Caco-2 (cell line): ENCODE measurements at regions of chr16 and their contacts with region 1.

Region 1: DNA sequence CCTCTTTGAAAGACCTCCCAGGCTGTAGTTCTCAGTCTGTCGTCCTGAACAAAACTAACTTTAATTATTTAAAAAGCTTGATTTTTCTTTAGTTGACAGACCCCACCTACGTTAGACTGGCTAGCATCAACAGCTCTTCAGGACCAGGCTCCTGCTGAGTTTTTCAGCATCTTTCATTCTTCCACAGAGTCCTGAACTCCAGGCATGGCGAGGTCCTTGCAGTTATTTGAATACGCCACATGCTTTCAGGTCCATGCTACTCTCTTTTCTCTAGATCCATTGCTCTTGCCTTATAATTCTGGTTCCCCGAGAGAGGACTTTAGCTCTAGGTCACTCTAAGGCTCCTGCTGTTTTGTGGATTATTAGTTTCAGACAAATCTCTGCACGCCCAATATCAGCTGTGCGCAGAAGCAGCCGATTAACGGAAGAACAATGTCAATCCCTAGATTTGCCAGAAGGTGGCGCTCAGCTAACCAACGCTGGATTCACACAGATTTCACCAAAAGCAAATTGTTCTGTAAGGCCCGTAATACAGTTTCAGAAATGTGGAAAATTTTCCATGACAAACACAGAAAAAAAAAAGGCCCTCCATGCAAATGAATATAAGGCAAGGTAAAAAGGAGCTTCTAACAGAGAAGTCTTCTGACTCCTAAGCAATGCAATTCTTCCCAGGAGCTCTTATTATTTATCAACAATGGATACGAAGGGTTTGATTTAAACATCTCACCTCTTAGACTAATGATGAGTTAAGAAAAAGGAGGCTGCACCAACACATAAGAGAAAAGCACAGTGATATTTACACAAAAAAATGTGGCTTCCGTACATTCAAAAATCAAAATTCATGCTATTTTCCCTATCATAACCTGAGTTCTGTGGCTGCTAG is 33.5 kb upstream of the BCO1 start:
- DNase-seq: peak in 1 of 2 experiments; percentile 55
- H3K4me3 ChIP-seq: no peak overlapping the region
- H3K4me3 Mint-ChIP-seq: no peak overlapping the region
- H3K27ac Mint-ChIP-seq: no peak overlapping the region
- H3K4me1 ChIP-seq: no peaks in the 10 kb centered on the region
- H3K4me1 Mint-ChIP-seq: peaks cover 6% of the 10 kb centered on the region
- H3K27me3 ChIP-seq: no peaks in the 10 kb centered on the region
- H3K27me3 Mint-ChIP-seq: peaks cover 2% of the 10 kb centered on the region
- CTCF ChIP-seq: peak; percentile 80

Region 2: GRCh38 chr16:80993307-80993706 is 211.7 kb before region 1 on chr16:
- CTCF ChIA-PET with region 1: no interaction called
- POLR2A ChIA-PET with region 1: no interaction called
- intact Hi-C with region 1: no loop called
- DNase-seq: peak; percentile 81 to 84
- H3K4me3 ChIP-seq: no peak overlapping the region
- H3K4me3 Mint-ChIP-seq: peak overlapping the region; percentile 62
- H3K27ac Mint-ChIP-seq: peak overlapping the region; percentile 91
- H3K4me1 ChIP-seq: peaks cover 52% of the 10 kb centered on the region
- H3K4me1 Mint-ChIP-seq: peaks cover 62% of the 10 kb centered on the region
- H3K27me3 ChIP-seq: no peaks in the 10 kb centered on the region
- H3K27me3 Mint-ChIP-seq: no peaks in the 10 kb centered on the region
- CTCF ChIP-seq: no peak

Region 3: DNA sequence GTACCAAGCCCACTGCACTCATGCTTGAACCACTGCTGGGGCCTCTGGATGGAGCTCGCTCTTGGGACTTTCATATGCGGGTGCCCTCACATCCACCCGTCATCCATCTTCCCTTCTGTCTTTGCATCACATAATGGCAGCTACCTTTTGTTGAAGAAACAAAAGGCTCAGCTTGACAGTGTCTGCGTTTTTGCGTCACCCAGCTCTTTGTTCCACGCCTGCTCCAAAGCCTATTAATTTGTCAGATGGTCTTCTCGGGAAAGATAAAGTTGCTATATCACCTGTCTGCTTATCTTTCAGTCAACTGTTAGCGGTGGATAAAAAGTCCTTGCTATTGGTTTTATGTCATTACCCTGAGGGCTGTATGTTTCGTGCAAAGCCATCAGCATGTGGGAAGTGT is 15.3 kb after region 1 on chr16:
- CTCF ChIA-PET with region 1: interaction called, 8 read pairs
- POLR2A ChIA-PET with region 1: no interaction called
- intact Hi-C with region 1: loop called (anchors 2 kb)
- DNase-seq: peak; percentile 36 to 61
- H3K4me3 ChIP-seq: no peak overlapping the region
- H3K4me3 Mint-ChIP-seq: no peak overlapping the region
- H3K27ac Mint-ChIP-seq: no peak overlapping the region
- H3K4me1 ChIP-seq: peaks cover 23% of the 10 kb centered on the region
- H3K4me1 Mint-ChIP-seq: peaks cover 28% of the 10 kb centered on the region
- H3K27me3 ChIP-seq: no peaks in the 10 kb centered on the region
- H3K27me3 Mint-ChIP-seq: no peaks in the 10 kb centered on the region
- CTCF ChIP-seq: no peak

Region 4: DNA sequence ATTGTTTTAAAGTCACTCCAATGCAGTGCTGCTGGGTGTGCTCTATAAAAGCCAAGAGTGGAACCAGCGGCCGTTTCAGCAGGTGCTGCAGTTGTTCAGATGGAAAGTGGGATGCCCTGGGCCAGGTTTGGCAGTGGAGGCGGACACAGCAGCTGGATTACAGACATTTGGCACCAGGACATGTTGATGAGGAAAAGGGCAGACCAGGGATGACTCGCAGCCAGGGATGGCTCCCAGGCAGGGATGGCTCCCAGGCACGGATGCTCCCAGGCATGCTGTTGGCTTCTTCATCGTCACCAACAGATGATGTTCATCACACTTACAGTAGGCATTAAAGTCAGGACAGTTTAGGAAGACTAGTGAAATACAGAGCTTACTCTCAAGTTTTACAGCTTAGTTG is 119.8 kb after region 1 on chr16:
- CTCF ChIA-PET with region 1: no interaction called
- POLR2A ChIA-PET with region 1: no interaction called
- intact Hi-C with region 1: no loop called
- DNase-seq: no peak
- H3K4me3 ChIP-seq: no peak overlapping the region
- H3K4me3 Mint-ChIP-seq: no peak overlapping the region
- H3K27ac Mint-ChIP-seq: no peak overlapping the region
- H3K4me1 ChIP-seq: peaks cover 8% of the 10 kb centered on the region; the same call in 1 of the 2 replicates
- H3K4me1 Mint-ChIP-seq: peaks cover 7% of the 10 kb centered on the region
- H3K27me3 ChIP-seq: no peaks in the 10 kb centered on the region
- H3K27me3 Mint-ChIP-seq: no peaks in the 10 kb centered on the region
- CTCF ChIP-seq: no peak

Region 5: DNA sequence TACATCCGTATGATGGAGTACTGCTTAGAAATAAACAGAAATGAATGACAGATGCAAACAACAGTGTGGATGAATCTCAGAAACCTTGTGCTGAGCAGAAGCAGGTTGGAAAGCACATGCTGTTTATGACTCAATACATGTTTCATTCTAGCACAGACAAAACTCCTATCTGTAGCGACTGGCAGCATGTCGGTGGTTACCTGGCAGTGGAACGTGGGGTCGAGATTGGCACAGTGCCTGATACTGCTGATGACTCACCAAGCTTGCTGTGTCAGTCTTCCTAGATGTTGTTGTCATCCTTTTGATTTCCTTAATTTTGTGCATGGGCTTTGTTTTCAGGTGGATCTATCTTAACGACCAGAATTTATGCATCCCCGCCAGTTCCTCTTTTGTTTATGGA is 171.8 kb after region 1 on chr16:
- CTCF ChIA-PET with region 1: no interaction called
- POLR2A ChIA-PET with region 1: interaction called, 11 read pairs
- intact Hi-C with region 1: no loop called
- DNase-seq: no peak
- H3K4me3 ChIP-seq: no peak overlapping the region
- H3K4me3 Mint-ChIP-seq: no peak overlapping the region
- H3K27ac Mint-ChIP-seq: no peak overlapping the region
- H3K4me1 ChIP-seq: no peaks in the 10 kb centered on the region
- H3K4me1 Mint-ChIP-seq: no peaks in the 10 kb centered on the region
- H3K27me3 ChIP-seq: no peaks in the 10 kb centered on the region
- H3K27me3 Mint-ChIP-seq: no peaks in the 10 kb centered on the region
- CTCF ChIP-seq: no peak